Posterior cingulate gyrus (tissue), 11 donors: ENCODE measurements at regions of chr12 and their contacts with region 1.

Region 1: GRCh38 chr12:40107098-40107802 is 1.4 kb upstream of the SLC2A13 start:
- DNase-seq: peak; percentile 71 to 97 (median 90)

Region 2: DNA sequence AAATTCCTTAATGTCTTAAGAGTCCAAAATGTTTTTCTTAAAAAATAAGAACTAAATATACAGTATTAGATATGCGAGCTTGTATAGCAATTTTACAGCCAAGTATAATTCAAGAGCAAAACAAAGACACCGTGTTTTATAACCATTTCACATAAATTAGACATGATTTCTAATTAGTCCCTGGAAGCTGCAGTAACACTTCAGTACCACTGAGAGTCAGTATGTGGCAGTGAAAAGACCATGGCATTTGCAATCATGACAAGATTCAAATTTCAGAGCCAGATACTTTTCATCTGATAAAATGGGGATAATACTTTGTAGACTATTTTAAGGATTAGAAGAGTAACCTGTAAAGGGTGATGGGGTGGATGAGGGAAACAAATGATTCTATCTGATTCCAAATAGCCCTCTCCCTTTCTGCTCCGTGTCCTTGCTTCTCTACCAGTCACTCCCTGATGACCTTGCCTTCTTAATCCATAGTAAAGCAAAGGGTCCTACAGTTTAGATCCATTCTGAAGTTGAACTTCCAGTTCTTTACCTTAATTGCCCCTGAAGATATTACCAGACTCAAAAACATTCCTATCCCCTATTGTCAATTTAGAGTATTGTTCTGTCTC is 342.2 kb before region 1 on chr12:
- intact Hi-C with region 1: loop called (anchors 1 kb)
- DNase-seq: no peak

Region 3: DNA sequence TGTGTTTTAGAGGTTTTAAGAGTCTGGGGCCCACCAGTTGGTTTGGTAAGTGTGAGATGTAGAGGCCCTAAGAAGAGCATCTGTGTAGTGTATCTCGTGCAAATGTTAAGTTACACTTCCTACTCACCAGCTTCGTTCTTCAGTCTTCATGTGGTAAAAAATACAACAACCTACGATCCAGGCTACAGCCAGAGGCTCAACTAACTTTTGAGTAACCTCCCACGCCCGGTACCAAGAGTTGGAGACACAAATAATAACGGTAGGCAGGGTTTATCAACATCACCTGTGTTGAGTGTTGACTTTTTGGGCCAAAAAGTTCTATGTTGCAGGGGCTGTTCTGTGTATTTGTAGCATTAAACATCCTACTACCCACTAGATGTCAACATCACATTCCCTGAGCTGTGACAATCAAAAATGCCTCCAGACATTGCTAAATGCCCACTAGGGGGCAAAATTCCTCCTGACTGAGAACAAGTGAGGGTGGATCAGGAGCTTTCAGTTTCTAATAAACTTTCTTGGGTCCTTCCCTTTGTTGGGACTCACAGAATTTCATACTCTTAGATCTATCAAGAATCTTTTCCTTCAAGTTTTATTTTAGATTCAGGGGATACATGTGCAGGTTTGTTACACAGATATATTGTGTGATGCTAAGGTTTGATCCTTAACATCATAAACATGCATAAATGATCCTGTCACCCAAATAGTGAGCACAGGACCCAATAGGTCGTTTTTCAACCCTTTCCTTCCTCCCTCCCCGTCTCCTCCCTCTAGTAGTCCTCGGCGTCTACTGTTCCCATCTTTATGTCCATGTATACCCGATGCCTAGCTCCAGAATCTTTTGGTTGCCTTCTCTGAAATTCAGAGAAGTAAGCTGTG is 96.1 kb before region 1 on chr12:
- intact Hi-C with region 1: loop called (anchors 1 kb)
- DNase-seq: peak in 4 of 10 donors; percentile 34 to 56 (median 36)